RWPE1 (cell line): ENCODE measurements at regions of chr1 and their contacts with region 1.

Region 1: GRCh38 chr1:240189386-240189989 is 97.8 kb downstream of the FMN2 start:
- DNase-seq: peak; percentile 58
- H3K27ac ChIP-seq: no peak overlapping the region
- CTCF ChIP-seq: peak; percentile 82

Region 2: GRCh38 chr1:240611619-240612480 is 422.4 kb after region 1 on chr1 and contains the start of gene GREM2:
- CTCF ChIA-PET with region 1: interaction called, 11 read pairs
- POLR2A ChIA-PET with region 1: no interaction called
- DNase-seq: peak; percentile 25
- H3K27ac ChIP-seq: no peak within 1 kb of the TSS
- CTCF ChIP-seq: no peak

Region 3: GRCh38 chr1:240691521-240692338 is 502.2 kb after region 1 on chr1:
- CTCF ChIA-PET with region 1: interaction called, 21 read pairs
- POLR2A ChIA-PET with region 1: no interaction called
- DNase-seq: peak; percentile 51
- H3K27ac ChIP-seq: no peak overlapping the region
- CTCF ChIP-seq: peak; percentile 74